AG04449 (cell line): ENCODE measurements at regions of chr6 and their contacts with region 1.

Region 1: DNA sequence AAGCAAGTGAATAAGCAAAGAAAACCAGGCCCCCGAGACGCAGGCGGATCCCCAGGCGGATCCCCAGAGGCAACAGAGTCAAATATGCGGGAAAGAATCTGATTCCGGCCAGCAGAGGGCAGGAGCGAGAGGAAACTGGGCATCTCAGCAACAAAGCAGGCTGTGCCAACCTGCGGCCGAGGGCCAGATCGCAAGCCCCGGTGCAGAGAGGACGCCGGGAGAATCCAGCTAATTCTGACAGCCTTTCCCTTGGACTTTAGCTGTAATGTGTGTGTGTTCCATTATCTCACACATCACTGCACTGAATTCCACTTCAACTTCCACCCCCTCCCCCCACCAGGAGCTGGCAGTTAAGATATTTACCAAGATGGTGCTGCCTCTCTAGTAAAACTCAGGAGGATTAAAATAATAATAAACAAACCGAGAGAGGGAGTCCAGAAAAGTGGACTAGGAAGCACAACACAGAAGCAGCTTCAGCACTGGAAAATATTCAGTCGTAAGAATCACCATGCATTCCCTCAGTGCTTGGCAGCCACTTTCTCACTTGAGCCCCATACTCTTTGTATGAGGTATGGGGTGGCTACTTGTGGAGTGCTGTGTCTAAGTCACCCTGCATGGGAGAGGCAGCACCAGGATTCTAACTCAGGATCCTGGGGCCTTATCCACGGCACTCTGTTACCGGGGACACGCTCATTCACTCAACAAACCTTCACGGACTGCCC is 66.2 kb upstream of the SNX9 start:
- DNase-seq: no peak
- H3K4me3 ChIP-seq: no peak overlapping the region
- CTCF ChIP-seq: peak; percentile 85

Region 2: GRCh38 chr6:157667211-157668008 is 89.5 kb before region 1 on chr6:
- CTCF ChIA-PET with region 1: interaction called, 49 read pairs
- POLR2A ChIA-PET with region 1: no interaction called
- DNase-seq: peak; percentile 56
- H3K4me3 ChIP-seq: no peak overlapping the region
- CTCF ChIP-seq: peak; percentile 69

Region 3: DNA sequence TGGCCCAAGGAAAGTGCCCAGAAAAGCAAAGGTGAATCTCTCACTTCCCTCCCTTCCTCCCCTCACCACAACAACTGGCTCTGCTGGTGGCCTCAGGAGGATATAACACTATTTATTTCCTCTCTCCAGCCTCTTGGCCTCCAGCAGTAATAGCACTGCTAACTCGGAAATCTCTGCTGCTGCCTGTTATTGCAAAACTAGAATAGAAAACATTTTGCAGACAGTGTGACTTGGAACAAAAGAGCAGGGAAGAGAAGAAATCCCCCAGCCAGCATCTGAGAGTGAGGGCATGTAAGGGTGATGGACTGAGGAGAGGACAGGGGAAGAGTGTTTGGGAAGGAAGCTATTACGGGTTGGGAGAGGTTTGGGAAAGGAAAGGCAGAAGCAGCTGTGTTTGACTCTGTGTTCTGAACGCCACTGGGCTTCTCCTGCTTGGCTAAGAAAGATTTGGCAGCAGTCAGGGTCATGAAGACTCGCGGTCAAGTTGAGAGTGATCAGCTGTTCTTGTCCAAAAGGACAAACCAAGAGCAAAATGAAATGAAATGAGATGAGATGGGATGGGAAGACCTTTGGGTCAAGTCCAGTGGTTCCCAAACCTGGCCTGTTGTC is 14.8 kb before region 1 on chr6:
- CTCF ChIA-PET with region 1: interaction called, 12 read pairs
- POLR2A ChIA-PET with region 1: no interaction called
- DNase-seq: no peak
- H3K4me3 ChIP-seq: no peak overlapping the region
- CTCF ChIP-seq: no peak

Region 4: DNA sequence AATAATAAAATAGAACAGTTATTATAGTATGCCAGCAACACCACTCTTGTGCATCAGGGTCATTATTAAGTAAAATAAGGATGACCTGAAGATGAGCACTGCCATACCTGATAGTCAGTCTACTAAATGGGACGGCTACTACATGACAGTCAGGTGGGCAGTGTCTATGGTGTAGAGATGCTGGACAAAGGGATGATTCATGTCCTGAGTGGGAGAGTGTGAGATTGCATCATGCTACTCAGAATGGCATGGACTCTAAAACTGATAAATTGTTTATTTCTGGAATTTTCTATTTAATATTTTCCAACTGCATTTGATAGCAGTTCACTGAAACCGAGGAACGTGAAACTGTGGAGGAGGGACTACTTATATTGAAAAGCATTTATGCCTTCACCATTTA is 104.9 kb after region 1 on chr6:
- CTCF ChIA-PET with region 1: interaction called, 22 read pairs
- POLR2A ChIA-PET with region 1: no interaction called
- DNase-seq: no peak
- H3K4me3 ChIP-seq: no peak overlapping the region
- CTCF ChIP-seq: no peak

Region 5: GRCh38 chr6:157885211-157885788 is 128.4 kb after region 1 on chr6:
- CTCF ChIA-PET with region 1: interaction called, 225 read pairs
- POLR2A ChIA-PET with region 1: no interaction called
- DNase-seq: no peak
- H3K4me3 ChIP-seq: no peak overlapping the region
- CTCF ChIP-seq: no peak

Region 6: DNA sequence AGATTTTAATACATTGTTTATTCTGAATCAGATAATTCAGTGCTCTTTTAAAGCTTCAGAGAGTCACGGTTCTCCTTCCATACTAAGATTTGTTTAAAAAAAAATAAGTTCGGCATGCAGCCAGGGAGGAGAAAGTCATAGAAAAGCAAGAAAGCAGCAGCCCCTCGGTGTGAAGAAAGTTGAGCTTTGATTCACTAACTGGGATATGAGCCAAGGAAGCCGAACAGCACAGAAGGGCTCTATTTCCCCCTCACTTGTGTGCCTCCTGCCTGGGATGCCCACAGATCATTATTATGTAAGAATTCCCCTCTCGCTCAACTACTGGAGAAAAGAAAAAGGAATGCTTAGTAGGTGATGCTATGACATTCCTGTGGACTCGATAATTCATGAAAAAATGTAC is 155.5 kb after region 1 on chr6:
- CTCF ChIA-PET with region 1: interaction called, 15 read pairs
- POLR2A ChIA-PET with region 1: no interaction called
- DNase-seq: peak; percentile 90
- H3K4me3 ChIP-seq: no peak overlapping the region
- CTCF ChIP-seq: no peak

Region 7: GRCh38 chr6:158103228-158103627 is 346.4 kb after region 1 on chr6:
- CTCF ChIA-PET with region 1: no interaction called
- POLR2A ChIA-PET with region 1: no interaction called
- DNase-seq: no peak
- H3K4me3 ChIP-seq: no peak overlapping the region
- CTCF ChIP-seq: no peak